Left ventricle myocardium superior (tissue), 1 donor: ENCODE measurements at regions of chr18 and their contacts with region 1.

Region 1: DNA sequence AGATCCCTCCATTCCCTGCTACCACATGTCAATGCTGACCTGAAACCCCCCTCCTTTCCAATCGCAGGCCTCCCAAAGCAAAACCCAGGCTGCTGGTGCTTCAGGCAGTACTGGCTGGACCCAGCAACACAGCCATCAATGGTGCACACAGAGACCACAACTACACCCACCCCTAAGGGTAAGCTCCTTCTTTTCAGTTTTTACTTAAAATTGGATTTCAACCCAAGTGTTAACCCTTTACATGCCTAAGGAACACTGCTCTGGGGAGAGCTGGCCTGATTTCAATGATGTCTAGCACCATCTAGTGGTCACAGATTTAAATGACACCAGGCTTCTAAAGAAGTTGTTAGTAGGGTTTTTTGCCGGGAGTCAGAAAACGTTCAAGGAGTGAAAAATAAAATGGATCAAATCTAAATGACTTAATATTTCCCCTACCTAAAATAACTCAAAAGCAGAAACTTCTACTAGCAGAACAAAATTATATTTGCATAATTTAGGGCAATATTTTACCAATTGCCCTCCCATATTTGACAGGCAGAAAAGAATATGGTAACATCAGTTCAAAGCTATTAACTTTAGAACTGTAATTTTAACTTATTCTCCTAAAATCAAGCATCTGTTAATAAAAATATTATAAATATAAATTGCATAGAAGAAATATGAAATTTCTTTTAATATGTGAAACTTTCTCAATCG is 24.6 kb downstream of the FECH start:
- DNase-seq: no peak
- ATAC-seq: peak; percentile 39

Region 2: GRCh38 chr18:56748698-56749268 is 813.1 kb before region 1 on chr18:
- intact Hi-C with region 1: loop called (anchors 10 kb)
- DNase-seq: no peak
- ATAC-seq: no peak

Region 3: DNA sequence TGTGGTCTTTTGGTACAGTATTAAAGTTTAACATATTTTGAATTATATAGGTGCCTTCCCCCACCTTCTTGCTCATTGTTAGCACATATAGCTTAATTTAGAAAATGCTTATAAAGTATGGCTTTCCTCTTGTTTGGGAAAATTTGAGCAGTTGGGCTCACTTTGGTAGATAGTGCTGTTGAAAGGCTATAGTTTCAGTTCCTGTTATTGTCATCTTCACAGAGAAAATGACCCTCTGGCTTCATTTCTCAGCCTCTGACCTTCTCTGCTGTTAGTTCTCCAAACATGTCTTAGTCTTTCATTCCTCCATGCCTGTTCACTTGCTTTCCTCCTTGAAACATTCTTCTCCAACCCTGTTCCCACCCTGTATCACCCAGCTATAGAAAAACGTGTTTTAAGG is 710.1 kb before region 1 on chr18:
- intact Hi-C with region 1: loop called (anchors 5 kb)
- DNase-seq: no peak
- ATAC-seq: no peak

Region 4: GRCh38 chr18:57959278-57959677 is 397.4 kb after region 1 on chr18:
- intact Hi-C with region 1: no loop called
- DNase-seq: no peak
- ATAC-seq: no peak